ENCODE measurements at regions of chr17 and their contacts with region 1.

Region 1: DNA sequence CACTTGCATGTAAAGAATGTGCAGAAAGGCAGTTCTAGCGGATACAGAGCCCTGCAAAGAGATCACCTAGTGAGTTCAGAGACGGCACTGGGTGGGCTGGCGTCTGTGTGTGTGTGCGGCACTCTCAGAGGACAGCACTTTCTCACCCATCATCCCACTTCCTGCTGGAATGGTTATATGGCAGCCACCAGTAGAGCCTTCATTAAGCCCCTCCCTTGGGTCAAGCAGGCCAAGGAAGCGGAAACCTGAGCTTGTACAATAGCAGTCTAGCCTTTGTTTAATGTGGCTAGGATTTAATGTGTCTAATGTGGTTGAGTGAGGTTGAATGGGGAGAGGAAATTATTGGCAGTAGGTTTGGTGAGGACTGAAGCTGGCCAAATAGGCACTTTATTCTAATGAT is 88.3 kb upstream of the ELAC2 start:
- DNase-seq: no peak

Region 2: GRCh38 chr17:12887088-12887487 is 219.1 kb before region 1 on chr17:
- intact Hi-C with region 1: no loop called
- DNase-seq: no peak

Region 3: GRCh38 chr17:13044572-13045065 is 61.6 kb before region 1 on chr17:
- intact Hi-C with region 1: loop called (anchors 10 kb)
- DNase-seq: no peak

Measured in posterior cingulate gyrus (tissue), 11 donors.